ENCODE measurements at regions of chr4 and their contacts with region 1.

Region 1: GRCh38 chr4:94746750-94747149 is 11.0 kb upstream of the BMPR1B start:
- DNase-seq: no peak
- H3K4me3 ChIP-seq: no peak overlapping the region
- H3K27ac ChIP-seq: no peak overlapping the region
- H3K4me1 ChIP-seq: no peaks in the 10 kb centered on the region
- H3K27me3 ChIP-seq: peaks cover 1% of the 10 kb centered on the region
- CTCF ChIP-seq: peak; percentile 26 to 55

Region 2: DNA sequence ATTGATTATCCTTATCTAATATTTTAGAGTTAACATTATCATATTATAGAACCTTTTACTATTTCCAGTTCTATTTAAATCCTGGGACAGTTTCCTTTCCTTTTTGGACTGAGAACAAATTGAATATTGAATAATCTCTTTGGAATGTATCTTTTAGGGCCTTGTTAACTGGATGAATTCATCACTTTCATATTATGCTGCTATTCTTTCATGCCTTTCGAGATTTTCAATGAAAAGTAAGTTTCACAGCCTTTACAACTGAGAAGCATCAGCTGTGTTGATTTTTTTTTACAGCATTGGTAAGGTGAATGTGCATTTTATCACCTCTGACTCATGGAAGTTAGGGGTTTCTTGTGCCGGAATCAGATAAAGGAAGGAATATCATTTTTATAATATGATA is 255.4 kb before region 1 on chr4:
- CTCF ChIA-PET with region 1: no interaction called
- dilution Hi-C with region 1: no loop called
- in situ Hi-C with region 1: no loop called
- intact Hi-C with region 1: no loop called
- DNase-seq: peak; percentile 54
- H3K4me3 ChIP-seq: peak overlapping the region in 2 of 3 experiments; percentile 14 to 21
- H3K27ac ChIP-seq: peak overlapping the region; percentile 85
- H3K4me1 ChIP-seq: peaks cover 51% of the 10 kb centered on the region
- H3K27me3 ChIP-seq: no peaks in the 10 kb centered on the region
- CTCF ChIP-seq: no peak

Region 3: GRCh38 chr4:95107635-95108034 is 360.9 kb after region 1 on chr4:
- CTCF ChIA-PET with region 1: no interaction called
- dilution Hi-C with region 1: no loop called
- in situ Hi-C with region 1: loop called in 1 of 2 experiments (anchors 10 kb)
- intact Hi-C with region 1: no loop called
- DNase-seq: peak; percentile 39
- H3K4me3 ChIP-seq: no peak overlapping the region
- H3K27ac ChIP-seq: no peak overlapping the region
- H3K4me1 ChIP-seq: no peaks in the 10 kb centered on the region
- H3K27me3 ChIP-seq: no peaks in the 10 kb centered on the region
- CTCF ChIP-seq: no peak

Measured in mammary epithelial cell (primary cell).